Activated CD4-positive, alpha-beta memory T cell treated with anti-CD3 and anti-CD28 coated beads for 36 hours (primary cell): ENCODE measurements at regions of chr5 and their contacts with region 1.

Region 1: GRCh38 chr5:139633295-139634027 is 14.7 kb upstream of the CXXC5 start:
- DNase-seq: peak; percentile 76
- H3K4me3 Mint-ChIP-seq: no peak overlapping the region
- H3K27ac Mint-ChIP-seq: peak overlapping the region; percentile 23
- H3K4me1 Mint-ChIP-seq: peaks cover 40% of the 10 kb centered on the region
- H3K27me3 Mint-ChIP-seq: no peaks in the 10 kb centered on the region

Region 2: DNA sequence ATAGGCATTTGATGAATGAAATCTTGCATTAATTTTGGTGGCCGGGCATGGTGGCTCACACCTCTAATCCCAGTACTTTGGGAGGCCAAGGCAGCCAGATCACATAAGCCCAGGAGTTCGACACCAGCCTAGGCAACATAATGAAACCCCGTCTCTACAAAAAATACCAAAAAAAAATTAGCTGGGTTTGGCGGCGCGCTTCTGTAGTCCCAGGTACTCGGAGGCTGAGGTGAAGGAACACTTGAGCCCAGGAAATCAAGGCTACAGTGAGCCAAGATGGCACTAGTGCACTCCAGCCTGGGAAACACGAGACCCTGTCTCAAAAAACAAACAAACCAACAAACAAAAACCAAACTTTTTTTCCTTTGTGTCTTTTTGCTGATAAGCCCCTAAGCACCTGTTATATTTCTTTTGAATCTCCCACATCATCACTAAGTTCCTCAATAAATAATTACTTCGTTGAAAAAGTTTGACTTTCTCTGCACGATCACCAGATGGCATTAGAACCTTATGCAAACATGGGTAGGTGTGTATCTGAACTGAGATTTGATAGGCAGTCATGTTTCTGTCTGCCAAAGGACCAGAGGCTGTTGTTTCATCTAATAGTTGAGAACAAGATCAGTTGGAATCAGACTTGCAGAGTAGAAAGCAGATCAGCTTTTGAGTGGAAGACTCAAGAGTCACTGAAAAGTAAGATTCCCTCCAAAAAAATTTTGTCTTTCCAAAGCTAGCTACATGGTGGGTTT is 345.4 kb before region 1 on chr5:
- CTCF ChIA-PET with region 1: no interaction called
- POLR2A ChIA-PET with region 1: no interaction called
- intact Hi-C with region 1: no loop called
- DNase-seq: no peak
- H3K4me3 Mint-ChIP-seq: no peak overlapping the region
- H3K27ac Mint-ChIP-seq: no peak overlapping the region
- H3K4me1 Mint-ChIP-seq: peaks cover 4% of the 10 kb centered on the region
- H3K27me3 Mint-ChIP-seq: no peaks in the 10 kb centered on the region

Region 3: GRCh38 chr5:139574641-139575312 is 58.7 kb before region 1 on chr5:
- CTCF ChIA-PET with region 1: interaction called, 14 read pairs
- POLR2A ChIA-PET with region 1: no interaction called
- intact Hi-C with region 1: loop called (anchors 2 kb)
- DNase-seq: no peak
- H3K4me3 Mint-ChIP-seq: no peak overlapping the region
- H3K27ac Mint-ChIP-seq: peak overlapping the region; percentile 5
- H3K4me1 Mint-ChIP-seq: peaks cover 70% of the 10 kb centered on the region
- H3K27me3 Mint-ChIP-seq: no peaks in the 10 kb centered on the region

Region 4: GRCh38 chr5:139651853-139652787 is 18.7 kb after region 1 on chr5:
- CTCF ChIA-PET with region 1: interaction called, 9 read pairs
- POLR2A ChIA-PET with region 1: interaction called, 13 read pairs
- intact Hi-C with region 1: loop called (anchors 1 kb)
- DNase-seq: peak; percentile 71
- H3K4me3 Mint-ChIP-seq: no peak overlapping the region
- H3K27ac Mint-ChIP-seq: no peak overlapping the region
- H3K4me1 Mint-ChIP-seq: peaks cover 23% of the 10 kb centered on the region
- H3K27me3 Mint-ChIP-seq: peaks cover 44% of the 10 kb centered on the region

Region 5: DNA sequence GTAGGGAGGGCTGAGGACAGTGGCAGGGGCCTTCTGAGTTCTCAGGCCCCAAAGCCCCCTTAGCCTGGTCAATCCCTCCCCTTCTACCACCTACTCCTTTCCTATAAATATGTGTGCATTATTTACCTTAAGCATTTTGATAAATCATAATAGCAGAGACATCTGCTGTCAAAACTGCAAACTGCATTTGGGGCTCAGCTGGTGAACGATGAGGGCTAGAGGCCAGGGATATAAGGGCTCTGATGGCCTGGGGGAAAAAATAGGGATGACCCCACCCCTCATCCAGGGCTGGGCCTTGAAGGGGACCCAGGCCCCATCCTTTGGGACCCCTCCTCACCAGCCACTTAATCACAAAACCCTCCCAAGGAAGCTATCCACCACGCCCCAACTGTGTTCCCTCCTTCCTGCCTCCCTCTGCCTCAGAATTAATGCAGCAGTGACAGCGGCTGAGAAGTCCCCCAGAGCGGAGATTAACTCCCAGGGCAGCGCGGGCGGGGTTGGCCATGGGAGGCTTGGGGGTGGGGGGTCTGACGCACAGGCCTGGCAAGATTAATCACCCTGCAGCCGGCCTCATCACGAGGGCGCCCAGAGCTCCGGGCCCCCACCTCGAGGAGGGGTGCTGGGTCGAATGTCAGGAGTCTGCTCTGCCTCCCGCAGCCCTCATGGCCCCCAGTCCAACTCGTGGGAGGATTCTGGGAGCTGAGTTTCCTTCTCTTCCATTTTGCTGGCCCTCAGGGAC is 56.8 kb after region 1 on chr5:
- CTCF ChIA-PET with region 1: interaction called, 58 read pairs
- POLR2A ChIA-PET with region 1: no interaction called
- intact Hi-C with region 1: loop called (anchors 1 kb)
- DNase-seq: no peak
- H3K4me3 Mint-ChIP-seq: no peak overlapping the region
- H3K27ac Mint-ChIP-seq: no peak overlapping the region
- H3K4me1 Mint-ChIP-seq: no peaks in the 10 kb centered on the region
- H3K27me3 Mint-ChIP-seq: no peaks in the 10 kb centered on the region

Region 6: DNA sequence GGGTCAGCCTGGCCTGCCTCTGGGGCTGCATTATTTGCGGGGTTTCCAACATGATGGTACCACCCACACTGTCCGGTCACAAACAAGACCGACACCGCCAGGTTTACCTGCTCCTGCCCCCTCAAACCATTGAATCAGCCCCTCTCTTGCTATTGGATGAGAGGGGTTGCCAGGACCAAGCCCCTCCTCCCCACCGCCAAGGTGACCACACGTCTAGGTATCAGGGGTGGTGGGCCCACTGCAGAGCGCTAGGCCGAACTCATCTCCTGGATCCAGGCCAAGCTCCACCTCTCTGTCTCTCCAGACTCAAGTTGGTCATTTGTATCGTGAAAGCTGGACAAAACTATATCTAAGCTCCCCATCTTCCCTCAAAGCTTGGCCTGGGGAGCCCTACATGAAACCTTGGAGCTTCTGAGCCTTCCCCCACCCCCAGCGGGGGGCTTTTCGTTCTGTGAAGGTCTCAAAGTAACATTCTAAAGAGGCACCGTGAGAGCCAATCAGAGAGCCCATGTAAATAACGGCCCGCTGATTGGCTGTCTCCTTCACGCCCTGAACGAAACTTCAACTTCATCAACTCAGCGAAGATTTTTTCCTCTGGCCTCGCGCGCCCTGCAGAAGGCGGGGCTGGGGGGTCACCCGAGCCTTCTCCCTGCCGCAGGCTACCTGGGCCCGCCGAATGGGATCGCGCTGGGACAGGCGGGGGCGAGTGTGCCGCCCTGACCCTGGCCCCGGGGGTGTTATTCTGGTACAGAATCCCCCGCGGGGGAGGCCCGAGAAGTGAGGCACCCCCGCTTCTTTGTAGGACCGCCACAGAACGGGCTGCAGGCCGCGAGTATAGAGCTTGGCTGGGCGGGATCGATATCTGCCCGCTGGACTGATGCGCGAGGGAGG is 112.6 kb after region 1 on chr5:
- CTCF ChIA-PET with region 1: no interaction called
- POLR2A ChIA-PET with region 1: interaction called, 3 read pairs
- intact Hi-C with region 1: loop called (anchors 2 kb)
- DNase-seq: peak; percentile 64
- H3K4me3 Mint-ChIP-seq: peak overlapping the region; percentile 14
- H3K27ac Mint-ChIP-seq: no peak overlapping the region
- H3K4me1 Mint-ChIP-seq: peaks cover 21% of the 10 kb centered on the region
- H3K27me3 Mint-ChIP-seq: peaks cover 10% of the 10 kb centered on the region